Posterior cingulate gyrus (tissue), 11 donors: ENCODE measurements at regions of chr5 and their contacts with region 1.

Region 1: GRCh38 chr5:31741496-31741895 is 102.6 kb downstream of the PDZD2 start:
- DNase-seq: peak in 9 of 10 donors; percentile 41 to 95 (median 70)

Region 2: GRCh38 chr5:31770998-31771397 is 29.5 kb after region 1 on chr5:
- intact Hi-C with region 1: loop called (anchors 1 kb)
- DNase-seq: no peak